PC-9 (cell line): ENCODE measurements at regions of chr2 and their contacts with region 1.

Region 1: GRCh38 chr2:218269899-218270720 is at the starts of genes AAMP and PNKD:
- DNase-seq: peak; percentile 94 to 100
- H3K4me3 ChIP-seq: peak within 1 kb of the TSS; percentile 91
- H3K27ac ChIP-seq: peak within 1 kb of the TSS; percentile 54
- H3K4me1 ChIP-seq: peaks cover 39% of the 10 kb centered on the region
- H3K27me3 ChIP-seq: no peaks in the 10 kb centered on the region
- CTCF ChIP-seq: no peak; the same call in 1 of the 2 replicates
- total RNA-seq, gene AAMP: 126 and 165 TPM in 2 replicates
- total RNA-seq, gene PNKD: 94.7 and 102 TPM in 2 replicates

Region 2: DNA sequence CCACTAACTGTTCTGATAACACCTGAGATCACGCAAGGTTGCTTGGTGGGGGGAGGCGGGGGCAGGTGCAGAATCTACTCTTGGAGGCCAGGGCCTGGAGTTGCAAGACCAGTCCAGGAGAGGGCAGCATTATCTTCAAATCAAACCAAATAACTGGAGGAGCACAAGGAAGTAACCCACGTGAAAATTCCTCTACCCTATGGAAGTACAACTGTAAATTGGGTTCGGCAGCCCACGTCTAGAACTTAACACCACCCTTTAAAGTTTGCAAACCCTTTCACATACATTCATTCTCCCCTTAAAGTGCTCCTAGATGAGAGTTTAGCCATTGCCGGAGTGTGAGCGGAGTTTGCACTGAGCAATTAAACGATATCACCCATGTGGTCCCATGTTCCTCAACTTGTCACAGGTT is 83.7 kb before region 1 on chr2:
- CTCF ChIA-PET with region 1: no interaction called
- POLR2A ChIA-PET with region 1: no interaction called
- intact Hi-C with region 1: loop called (anchors 5 kb)
- DNase-seq: peak; percentile 56 to 72
- H3K4me3 ChIP-seq: no peak overlapping the region
- H3K27ac ChIP-seq: no peak overlapping the region
- H3K4me1 ChIP-seq: no peaks in the 10 kb centered on the region; the same call in 1 of the 2 replicates
- H3K27me3 ChIP-seq: 0 out of 2 replicates have a peak, but pooled peaks cover 6% of the 10 kb centered on the region
- CTCF ChIP-seq: peak; percentile 87

Region 3: DNA sequence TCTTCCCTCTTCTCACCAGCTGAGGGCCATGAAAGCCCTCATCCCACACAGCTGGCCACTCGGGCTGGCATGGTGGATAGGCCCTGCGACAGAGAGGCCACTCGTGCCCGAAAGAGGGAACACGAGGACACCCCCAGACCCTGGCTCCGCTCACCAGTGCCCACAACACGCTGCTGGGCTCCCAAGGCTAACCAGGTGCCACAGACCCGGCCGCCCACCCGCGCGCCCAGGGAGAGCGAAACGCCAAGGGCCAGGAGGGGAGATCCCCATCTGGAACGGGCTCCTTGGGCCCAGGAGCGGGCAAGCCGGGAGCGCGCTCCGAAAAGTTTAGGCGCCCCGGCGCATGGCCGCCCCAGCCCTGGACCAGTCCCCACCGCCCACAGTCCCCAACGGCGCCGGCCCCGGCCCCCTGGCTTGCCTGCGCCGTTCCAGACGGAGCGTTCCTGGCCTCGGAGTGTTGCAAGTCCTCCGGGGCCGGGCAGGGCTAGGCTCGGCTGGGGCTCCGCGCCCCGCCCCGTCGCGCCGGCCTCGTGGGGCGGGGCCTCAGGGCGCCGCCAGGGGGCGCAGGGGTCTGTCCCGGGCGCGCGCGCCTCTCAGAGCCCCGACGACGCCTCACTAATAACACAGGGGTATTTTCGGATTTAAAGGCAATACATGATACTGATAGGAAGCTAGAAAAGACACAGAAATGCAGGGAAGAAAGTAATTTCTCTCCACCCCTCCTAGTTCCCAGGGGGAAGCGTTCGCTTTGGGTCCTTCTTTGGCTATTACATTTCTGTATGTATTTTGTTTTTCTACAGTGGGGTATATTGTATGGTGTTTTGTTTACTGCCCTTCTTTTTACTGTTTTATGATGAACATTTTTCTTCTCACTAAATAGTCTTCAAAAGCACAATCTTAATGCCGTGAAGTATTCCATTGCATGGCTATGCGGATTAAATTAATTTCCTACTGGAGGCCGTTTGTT is 22.2 kb after region 1 on chr2 and contains the start of gene TMBIM1:
- CTCF ChIA-PET with region 1: interaction called, 26 read pairs
- POLR2A ChIA-PET with region 1: interaction called, 13 read pairs
- intact Hi-C with region 1: loop called (anchors 1 kb)
- DNase-seq: peak; percentile 38 to 85
- H3K4me3 ChIP-seq: peak within 1 kb of the TSS; percentile 89
- H3K27ac ChIP-seq: peak within 1 kb of the TSS; percentile 96
- H3K4me1 ChIP-seq: peaks cover 87% of the 10 kb centered on the region
- H3K27me3 ChIP-seq: no peaks in the 10 kb centered on the region
- CTCF ChIP-seq: peak; percentile 66
- total RNA-seq, gene TMBIM1: 172 and 187 TPM in 2 replicates

Region 4: GRCh38 chr2:218322895-218323808 is 53.0 kb after region 1 on chr2:
- CTCF ChIA-PET with region 1: interaction called, 19 read pairs
- POLR2A ChIA-PET with region 1: interaction called, 7 read pairs
- intact Hi-C with region 1: loop called (anchors 2 kb)
- DNase-seq: peak; percentile 66 to 94
- H3K4me3 ChIP-seq: peak overlapping the region; percentile 66
- H3K27ac ChIP-seq: peak overlapping the region; percentile 88
- H3K4me1 ChIP-seq: peaks cover 46% of the 10 kb centered on the region
- H3K27me3 ChIP-seq: no peaks in the 10 kb centered on the region
- CTCF ChIP-seq: no peak

Region 5: DNA sequence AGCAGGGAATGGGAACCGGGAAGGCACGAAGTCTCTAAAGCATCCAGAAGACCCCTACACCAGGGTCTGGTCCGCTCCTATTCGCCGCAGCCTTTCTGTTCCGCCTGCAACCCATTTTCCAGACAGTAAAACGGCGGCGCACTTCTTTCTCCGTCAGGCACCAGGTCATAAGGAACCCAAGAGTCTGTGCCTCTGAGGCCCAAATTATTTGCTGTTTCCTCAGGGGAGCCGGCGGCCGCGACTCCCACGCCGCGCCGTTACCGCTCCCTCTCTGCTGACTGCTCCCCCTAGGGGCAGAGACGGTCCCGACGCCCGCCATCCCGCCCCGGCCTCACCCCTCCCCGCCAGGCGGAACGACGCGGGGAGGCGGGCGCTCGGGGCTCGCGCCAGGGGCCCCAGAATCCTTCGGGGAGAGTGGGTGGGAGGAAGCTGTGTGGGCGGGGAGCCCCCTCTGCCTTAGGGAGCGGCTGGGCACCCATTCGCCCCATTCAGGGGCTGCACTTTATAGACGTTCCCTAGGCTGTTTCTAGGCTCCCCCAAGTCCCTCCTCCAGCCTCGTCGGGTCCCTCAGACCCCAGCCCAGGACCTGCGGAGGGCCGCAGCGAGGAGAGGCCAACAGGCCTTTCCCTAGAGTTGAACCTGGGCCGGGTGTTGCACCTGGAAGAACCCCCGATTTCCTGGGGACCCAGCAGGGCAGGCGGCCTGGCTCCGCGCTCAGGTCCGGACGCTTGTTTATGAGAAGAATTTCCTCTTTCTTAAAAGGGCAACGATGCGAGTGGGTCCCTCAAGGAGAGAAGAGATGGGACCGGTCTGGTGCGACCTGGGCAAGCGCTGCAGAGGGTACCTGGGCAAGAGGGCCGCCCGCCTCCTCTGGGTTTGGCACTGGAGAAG is 125.9 kb after region 1 on chr2:
- CTCF ChIA-PET with region 1: interaction called, 7 read pairs
- POLR2A ChIA-PET with region 1: interaction called, 5 read pairs
- intact Hi-C with region 1: loop called (anchors 1 kb)
- DNase-seq: peak; percentile 83 to 95
- H3K4me3 ChIP-seq: peak overlapping the region; percentile 89
- H3K27ac ChIP-seq: peak overlapping the region; percentile 79
- H3K4me1 ChIP-seq: peaks cover 20% of the 10 kb centered on the region
- H3K27me3 ChIP-seq: no peaks in the 10 kb centered on the region
- CTCF ChIP-seq: peak; percentile 86

Region 6: GRCh38 chr2:218659258-218659987 is 389.3 kb after region 1 on chr2 and contains the starts of genes BCS1L and ZNF142:
- CTCF ChIA-PET with region 1: no interaction called
- POLR2A ChIA-PET with region 1: no interaction called
- intact Hi-C with region 1: loop called (anchors 10 kb)
- DNase-seq: peak; percentile 81 to 89
- H3K4me3 ChIP-seq: peak within 1 kb of the TSS; percentile 75
- H3K27ac ChIP-seq: peak within 1 kb of the TSS; percentile 42
- H3K4me1 ChIP-seq: peaks cover 5% of the 10 kb centered on the region; the same call in 1 of the 2 replicates
- H3K27me3 ChIP-seq: no peaks in the 10 kb centered on the region
- CTCF ChIP-seq: no peak
- total RNA-seq, gene BCS1L: 36.0 and 38.8 TPM in 2 replicates
- total RNA-seq, gene ZNF142: 23.1 and 23.7 TPM in 2 replicates